ENCODE measurements at regions of chr11 and their contacts with region 1.

Region 1: DNA sequence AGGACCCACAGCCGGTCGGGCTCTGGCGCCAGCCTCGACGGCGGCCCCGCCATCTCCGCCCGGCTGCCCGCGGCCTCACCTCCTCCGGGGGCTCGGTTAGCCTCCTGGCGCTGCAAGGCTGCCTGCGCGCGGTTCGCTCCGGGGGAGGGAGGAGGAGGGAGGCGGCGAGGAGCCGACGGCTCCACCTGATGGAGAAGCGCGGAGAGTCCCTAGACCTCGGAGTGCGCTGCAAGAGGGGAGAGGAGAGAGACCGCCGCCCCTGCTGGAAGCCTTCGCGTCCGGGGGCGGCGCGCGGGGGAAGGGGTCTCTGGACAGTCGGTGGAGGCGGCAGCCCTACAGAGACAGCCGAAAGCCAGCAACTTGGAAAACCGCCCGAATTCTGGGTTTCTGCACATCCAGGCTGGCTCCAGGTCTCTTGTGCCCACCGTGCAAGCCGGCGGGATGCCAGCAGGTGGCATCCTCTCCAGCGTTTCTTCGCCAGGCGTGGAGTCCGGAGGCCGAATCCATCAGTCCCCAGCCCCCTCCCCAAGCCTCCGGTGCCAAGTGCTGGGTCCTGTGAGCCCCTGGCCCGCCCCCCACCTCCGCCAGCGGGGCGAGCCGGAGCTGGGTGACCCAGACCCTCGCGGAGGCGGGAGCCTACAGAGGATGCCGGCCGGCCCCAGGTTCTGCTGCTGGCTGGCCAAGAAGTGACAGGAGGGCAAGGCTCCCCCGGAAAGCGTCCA is 2.9 kb upstream of the KIRREL3 start:
- DNase-seq: peak in 8 of 10 donors; percentile 39 to 80 (median 56)
- H3K4me3 ChIP-seq: peak overlapping the region; percentile 37 to 83 (median 61)
- H3K27ac ChIP-seq: peak overlapping the region in 31 of 59 donors; percentile 0 to 88 (median 48)
- H3K27me3 ChIP-seq: peaks cover 0 to 19% (median 0%) of the 10 kb centered on the region in 45 donors
- CTCF ChIP-seq: peak in 54 of 56 donors; percentile 24 to 68 (median 50)

Region 2: DNA sequence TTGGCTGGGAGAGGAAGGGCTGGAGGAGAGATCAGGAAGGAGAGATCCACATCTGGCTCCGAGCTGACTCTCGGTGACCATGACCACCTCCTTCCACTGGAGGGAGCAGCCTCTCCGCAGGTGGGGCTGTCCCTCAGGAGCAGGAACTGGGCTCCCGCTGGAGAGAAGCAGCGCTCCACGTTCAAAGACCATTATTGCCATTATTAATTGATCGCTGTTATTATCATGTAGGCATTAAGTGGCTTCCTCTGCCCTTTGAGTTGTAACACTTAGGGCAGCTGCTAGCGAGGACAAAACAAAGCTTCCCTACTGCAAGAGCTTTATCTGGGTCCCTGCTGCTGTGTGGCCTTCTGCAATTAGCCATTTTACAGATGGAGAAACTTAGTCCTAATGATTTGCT is 396.0 kb before region 1 on chr11:
- intact Hi-C with region 1: loop called in 1 of 2 experiments (anchors 2 kb)
- DNase-seq: peak in 9 of 10 donors; percentile 63 to 83 (median 75)
- H3K4me3 ChIP-seq: peak overlapping the region in 2 of 59 donors; percentile 20 to 32
- H3K27ac ChIP-seq: peak overlapping the region in 19 of 59 donors; percentile 4 to 70 (median 21)
- H3K27me3 ChIP-seq: no peaks in the 10 kb centered on the region
- CTCF ChIP-seq: peak; percentile 26 to 92 (median 83)

Region 3: DNA sequence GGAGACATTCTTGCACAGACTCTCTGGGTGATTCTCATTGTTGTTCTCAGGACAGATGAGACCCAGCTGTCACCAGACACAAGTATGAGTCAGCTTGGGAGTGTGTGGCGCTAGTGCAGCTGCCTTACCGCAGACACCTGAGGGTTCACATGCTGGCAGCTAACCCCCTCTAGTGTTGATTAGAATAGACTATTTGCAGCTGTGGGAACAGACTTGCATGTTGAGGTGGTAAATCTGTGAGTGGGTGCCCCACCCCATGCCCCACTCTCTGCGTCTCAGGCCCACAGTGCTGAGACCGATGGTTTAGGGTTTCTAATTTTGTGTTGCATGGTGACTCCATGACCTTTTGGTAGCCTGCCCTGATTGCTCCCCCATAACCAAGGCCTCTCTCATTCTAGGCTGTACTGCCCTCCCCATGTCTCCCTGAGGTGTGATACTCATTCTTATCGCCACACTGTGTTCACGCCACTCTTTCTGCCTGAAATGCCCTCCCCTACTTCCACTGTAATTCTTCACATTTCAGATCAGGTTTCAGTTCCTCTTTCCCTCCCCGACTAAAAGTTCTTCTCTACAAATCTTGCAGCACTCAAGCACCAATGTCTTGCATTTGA is 70.8 kb after region 1 on chr11:
- intact Hi-C with region 1: loop called in 1 of 2 experiments (anchors 5 kb)
- DNase-seq: peak in 7 of 10 donors; percentile 42 to 82 (median 57)
- H3K4me3 ChIP-seq: no peak overlapping the region
- H3K27ac ChIP-seq: peak overlapping the region in 1 of 59 donors; percentile 9
- H3K27me3 ChIP-seq: peaks cover 0 to 4% (median 0%) of the 10 kb centered on the region in 45 donors
- CTCF ChIP-seq: peak in 53 of 56 donors; percentile 11 to 66 (median 39)

Measured in dorsolateral prefrontal cortex (tissue), 120 donors.